Pancreas (tissue), 10 donors: ENCODE measurements at regions of chrX and their contacts with region 1.

Region 1: GRCh38 chrX:37759878-37760418 is 19.9 kb upstream of the CYBB start:
- DNase-seq: no peak
- ATAC-seq: no peak
- H3K4me3 ChIP-seq: no peak overlapping the region
- H3K27ac ChIP-seq: no peak overlapping the region
- H3K4me1 ChIP-seq: no peaks in the 10 kb centered on the region
- H3K27me3 ChIP-seq: no peaks in the 10 kb centered on the region
- CTCF ChIP-seq: no peak

Region 2: DNA sequence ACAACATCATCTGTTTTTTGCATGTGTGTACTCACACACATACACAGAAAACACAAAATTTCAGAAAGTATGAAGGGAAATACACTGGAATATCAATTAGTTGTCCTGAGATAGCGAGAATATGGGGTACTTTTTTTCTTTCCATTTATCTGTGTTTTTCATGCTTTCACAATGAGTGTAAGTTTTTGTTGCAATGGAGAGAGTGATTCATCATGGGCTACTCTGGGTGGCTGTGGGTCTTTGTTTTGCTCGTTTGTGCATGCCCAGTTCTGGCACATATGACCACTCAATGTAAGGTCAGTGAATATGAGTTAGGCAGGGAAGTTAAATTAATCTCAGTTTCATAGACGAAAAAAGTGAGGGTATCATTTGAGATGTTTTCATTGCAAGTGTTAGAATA is 47.5 kb before region 1 on chrX:
- intact Hi-C with region 1: loop called in 1 of 3 experiments (anchors 5 kb)
- DNase-seq: no peak
- ATAC-seq: no peak
- H3K4me3 ChIP-seq: no peak overlapping the region
- H3K27ac ChIP-seq: no peak overlapping the region
- H3K4me1 ChIP-seq: no peaks in the 10 kb centered on the region
- H3K27me3 ChIP-seq: no peaks in the 10 kb centered on the region
- CTCF ChIP-seq: no peak

Region 3: GRCh38 chrX:37860721-37861120 is 100.8 kb after region 1 on chrX:
- intact Hi-C with region 1: no loop called
- DNase-seq: no peak
- ATAC-seq: no peak
- H3K4me3 ChIP-seq: no peak overlapping the region
- H3K27ac ChIP-seq: no peak overlapping the region
- H3K4me1 ChIP-seq: peaks cover 0 to 2% (median 0%) of the 10 kb centered on the region in 3 donors
- H3K27me3 ChIP-seq: peaks cover 0 to 3% (median 0%) of the 10 kb centered on the region in 4 donors
- CTCF ChIP-seq: no peak